ENCODE measurements at regions of chr5 and their contacts with region 1.

Region 1: DNA sequence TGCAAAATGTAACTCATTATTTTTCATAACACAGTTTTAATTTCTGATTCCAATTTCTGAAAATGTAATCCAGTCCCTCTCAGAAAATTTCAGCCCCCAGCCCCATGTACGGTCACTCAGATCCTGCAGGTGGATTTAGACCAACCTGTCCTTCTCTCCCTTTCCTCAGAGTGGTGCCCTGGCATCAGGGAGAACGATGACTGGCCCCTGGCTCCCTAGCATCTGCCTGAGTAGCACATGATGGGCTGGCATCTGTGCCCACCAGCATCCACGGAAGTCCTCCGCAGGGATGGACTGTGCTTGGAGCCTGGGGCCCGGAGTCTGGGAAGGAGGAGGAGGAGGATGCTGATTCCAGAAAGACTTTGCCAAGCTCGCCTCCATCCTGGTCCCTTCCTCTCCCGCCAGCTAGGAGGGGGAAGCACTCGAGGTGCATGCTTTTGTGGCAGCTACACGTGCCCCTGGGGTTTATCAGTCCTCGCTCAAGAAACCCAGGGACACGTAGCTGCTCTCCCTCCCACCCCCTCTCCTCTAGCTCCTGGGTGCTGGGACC is 54.4 kb upstream of the RUFY1 start:
- DNase-seq: no peak
- ATAC-seq: no peak
- H3K4me3 Mint-ChIP-seq: no peak overlapping the region
- H3K27ac Mint-ChIP-seq: no peak overlapping the region
- H3K4me1 Mint-ChIP-seq: no peaks in the 10 kb centered on the region
- H3K27me3 Mint-ChIP-seq: peaks cover 3% of the 10 kb centered on the region

Region 2: DNA sequence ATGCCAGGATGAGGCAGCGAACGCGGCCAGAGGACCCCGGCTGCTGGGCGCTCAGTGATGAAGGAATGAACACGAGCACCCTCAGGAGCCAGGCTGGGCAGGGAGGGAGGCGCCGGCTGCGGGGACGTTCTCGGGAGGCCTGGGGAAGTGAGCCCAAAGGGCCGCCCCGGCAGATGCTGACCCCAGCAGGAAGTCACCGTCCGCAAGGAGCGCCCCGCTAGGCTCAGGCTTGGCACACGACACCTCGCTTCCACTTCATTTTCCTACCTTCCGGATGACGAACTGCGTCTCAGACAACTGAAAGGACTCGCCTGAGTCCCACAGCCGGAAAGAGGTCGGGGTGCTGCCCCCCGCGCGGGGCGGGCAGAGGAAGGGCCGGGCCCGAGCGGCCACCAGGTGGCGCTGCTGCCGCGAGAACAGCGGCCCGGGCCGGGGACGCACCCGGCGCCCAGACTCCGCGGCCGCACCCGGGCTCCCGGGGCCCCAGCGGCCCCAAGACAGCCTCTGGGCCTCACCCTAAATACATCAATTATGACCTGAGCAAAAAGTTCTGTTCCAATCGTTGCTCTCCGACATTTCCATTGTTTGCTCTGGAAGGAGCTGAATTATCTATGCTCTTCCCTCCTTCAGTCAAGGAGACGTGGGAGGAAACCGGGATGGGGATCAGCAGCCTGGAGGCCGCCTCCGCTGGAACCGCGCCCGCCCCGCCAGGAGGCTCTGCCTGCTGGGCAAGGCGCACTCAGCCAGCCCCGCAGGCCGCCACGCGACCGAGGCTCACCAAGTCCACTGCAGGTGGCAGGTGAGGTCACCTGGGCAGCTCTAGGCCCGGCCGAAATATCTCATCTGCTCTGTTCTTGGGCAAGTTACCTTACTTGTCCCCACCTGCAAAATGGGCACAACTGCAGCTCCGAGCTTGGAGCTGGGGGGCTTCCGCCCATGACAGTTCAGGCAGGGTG is 328.8 kb before region 1 on chr5:
- CTCF ChIA-PET with region 1: interaction called, 17 read pairs
- POLR2A ChIA-PET with region 1: no interaction called
- DNase-seq: peak; percentile 66
- ATAC-seq: peak; percentile 90
- H3K4me3 Mint-ChIP-seq: no peak overlapping the region
- H3K27ac Mint-ChIP-seq: no peak overlapping the region
- H3K4me1 Mint-ChIP-seq: peaks cover 3% of the 10 kb centered on the region
- H3K27me3 Mint-ChIP-seq: no peaks in the 10 kb centered on the region